ENCODE measurements at regions of chr2 and their contacts with region 1.

Region 1: DNA sequence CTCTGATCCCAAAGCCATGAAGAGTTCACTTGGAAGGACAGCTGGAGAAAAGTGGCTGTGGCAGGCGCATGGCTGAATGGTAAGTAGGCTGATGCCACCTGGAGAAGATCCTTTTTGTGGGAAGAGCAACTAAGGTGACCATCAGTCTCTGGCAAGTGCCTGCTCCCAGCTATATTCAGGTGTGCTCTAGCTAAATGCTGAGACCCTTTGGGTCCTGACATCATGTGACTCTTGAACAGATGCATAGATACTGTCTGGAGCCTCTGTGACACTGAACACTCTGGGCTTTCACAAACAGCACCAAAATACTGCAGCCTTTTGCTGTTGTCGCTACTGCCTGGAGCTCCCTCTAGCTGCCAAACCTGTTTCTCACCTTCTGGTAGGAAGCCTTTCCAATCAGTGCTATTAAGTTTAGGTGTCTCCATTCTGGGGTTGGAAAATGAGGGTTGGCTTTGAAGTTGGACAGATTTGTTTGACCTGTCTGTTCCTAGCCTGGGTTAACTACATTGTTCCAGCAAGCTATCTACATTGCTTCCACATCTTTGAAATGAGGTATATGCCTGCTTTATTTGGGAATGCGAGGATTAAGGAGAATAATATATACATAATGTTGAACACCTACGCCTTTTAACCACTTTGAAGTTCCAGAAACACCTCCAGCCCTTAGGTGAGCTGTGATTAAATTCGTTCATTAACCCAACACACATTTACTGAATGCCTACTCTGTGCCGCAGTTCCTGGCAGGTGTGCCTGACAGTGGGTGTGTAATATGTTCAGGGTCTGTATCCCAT is 3.1 kb downstream of the EGR4 start:
- DNase-seq: peak; percentile 57 to 77 (median 73)
- H3K4me3 ChIP-seq: no peak overlapping the region
- H3K27ac ChIP-seq: no peak overlapping the region
- H3K4me1 ChIP-seq: peaks cover 3 to 38% (median 37%) of the 10 kb centered on the region in 4 experiments
- H3K27me3 ChIP-seq: peaks cover 17 to 57% (median 27%) of the 10 kb centered on the region in 5 experiments

Region 2: DNA sequence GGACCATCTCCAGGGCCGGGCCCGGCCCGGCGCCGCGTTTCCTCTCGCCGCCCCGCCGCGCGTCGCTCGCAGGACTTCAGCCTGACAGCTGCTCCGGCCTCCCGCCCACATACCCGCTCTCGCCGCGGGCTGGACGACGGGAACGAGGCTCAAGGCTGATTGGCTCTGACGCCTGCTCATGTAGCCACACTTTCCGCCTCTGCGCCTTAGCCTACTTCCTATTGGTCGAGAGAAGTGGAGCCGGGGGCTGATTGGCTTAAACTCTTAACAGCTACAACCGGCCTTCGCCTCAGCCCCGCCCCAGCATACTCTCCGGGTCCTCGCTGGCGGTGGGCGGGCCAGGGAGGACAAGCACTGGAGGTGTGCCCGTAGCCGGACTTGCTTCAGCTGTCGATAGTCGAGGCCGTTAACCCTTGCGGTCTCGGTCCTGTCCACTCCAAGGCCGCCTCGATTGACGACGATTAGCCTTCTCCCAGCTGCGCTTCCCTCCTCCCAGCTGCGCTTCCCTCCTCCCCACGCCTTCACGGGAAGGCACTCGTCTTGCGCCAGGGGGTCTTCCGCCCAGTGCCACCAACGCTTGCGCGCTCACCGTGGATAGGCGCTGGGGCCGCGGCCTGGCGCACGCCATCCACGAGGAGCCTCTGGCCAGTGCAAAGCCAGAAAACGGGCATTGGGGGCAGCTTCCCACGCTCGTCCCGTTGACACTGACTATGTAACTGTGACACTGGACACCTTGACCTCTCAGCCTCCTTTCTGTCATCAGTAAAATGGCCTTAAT is 56.9 kb before region 1 on chr2 and contains the start of gene PRADC1:
- CTCF ChIA-PET with region 1: interaction called, 21 read pairs
- POLR2A ChIA-PET with region 1: interaction called, 6 read pairs
- DNase-seq: peak; percentile 99
- H3K4me3 ChIP-seq: peak within 1 kb of the TSS; percentile 77 to 96 (median 92)
- H3K27ac ChIP-seq: peak within 1 kb of the TSS; percentile 91 to 96
- H3K4me1 ChIP-seq: peaks cover 16 to 38% (median 27%) of the 10 kb centered on the region in 4 experiments
- H3K27me3 ChIP-seq: no peaks in the 10 kb centered on the region

Region 3: DNA sequence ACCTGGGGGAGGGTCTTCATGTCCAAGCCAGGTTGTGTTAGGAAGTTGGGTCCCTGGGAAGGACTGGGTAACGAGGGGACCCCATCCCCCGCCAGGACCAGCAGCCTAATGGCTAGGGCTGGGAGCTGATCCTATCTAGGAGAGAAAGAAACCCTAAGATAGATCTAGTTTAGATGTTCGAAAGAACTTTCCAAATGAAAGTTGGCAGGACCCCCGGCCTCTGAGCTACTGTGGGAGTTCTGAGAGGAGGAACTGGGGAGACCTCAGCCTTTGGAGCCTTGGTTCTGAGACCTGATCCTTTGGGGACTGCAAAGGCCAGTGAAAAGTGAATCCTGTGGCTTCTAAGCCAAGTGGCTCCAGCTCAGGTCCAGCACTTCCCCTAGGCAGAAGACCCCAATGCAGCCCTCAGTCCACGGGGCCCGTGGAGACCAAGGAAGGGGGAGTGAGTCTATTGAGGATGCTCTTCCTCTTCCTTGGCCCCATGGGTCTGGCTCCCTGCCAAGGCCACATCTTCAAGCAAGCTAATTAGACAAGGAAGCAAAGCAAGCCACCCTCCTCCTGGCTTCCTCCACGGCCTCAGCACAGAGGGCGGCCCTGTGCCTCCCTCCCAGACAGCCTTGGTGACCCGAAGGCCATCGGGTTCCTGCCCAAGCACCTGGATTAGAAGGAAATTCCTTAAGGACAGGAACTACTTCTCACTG is 32.7 kb before region 1 on chr2:
- CTCF ChIA-PET with region 1: interaction called, 25 read pairs
- POLR2A ChIA-PET with region 1: no interaction called
- DNase-seq: peak in 2 of 3 donors; percentile 29 to 40
- H3K4me3 ChIP-seq: no peak overlapping the region
- H3K27ac ChIP-seq: no peak overlapping the region
- H3K4me1 ChIP-seq: peaks cover 0 to 18% (median 0%) of the 10 kb centered on the region in 4 experiments
- H3K27me3 ChIP-seq: no peaks in the 10 kb centered on the region

Region 4: GRCh38 chr2:73272270-73272669 is 18.0 kb before region 1 on chr2:
- CTCF ChIA-PET with region 1: interaction called, 24 read pairs
- POLR2A ChIA-PET with region 1: no interaction called
- DNase-seq: no peak
- H3K4me3 ChIP-seq: no peak overlapping the region
- H3K27ac ChIP-seq: no peak overlapping the region
- H3K4me1 ChIP-seq: peaks cover 0 to 4% (median 0%) of the 10 kb centered on the region in 4 experiments
- H3K27me3 ChIP-seq: peaks cover 0 to 19% (median 3%) of the 10 kb centered on the region in 5 experiments